ENCODE measurements at regions of chr7 and their contacts with region 1.

Region 1: GRCh38 chr7:44638611-44639557 is 32.5 kb downstream of the OGDH start:
- DNase-seq: no peak
- H3K4me3 ChIP-seq: no peak overlapping the region
- H3K27ac ChIP-seq: peak overlapping the region; percentile 77 to 80 (median 78)
- H3K4me1 ChIP-seq: peaks cover 57 to 65% (median 64%) of the 10 kb centered on the region in 4 donors
- H3K27me3 ChIP-seq: no peaks in the 10 kb centered on the region
- CTCF ChIP-seq: no peak
- EP300 ChIP-seq: no peak
- POLR2A ChIP-seq: no peak

Region 2: DNA sequence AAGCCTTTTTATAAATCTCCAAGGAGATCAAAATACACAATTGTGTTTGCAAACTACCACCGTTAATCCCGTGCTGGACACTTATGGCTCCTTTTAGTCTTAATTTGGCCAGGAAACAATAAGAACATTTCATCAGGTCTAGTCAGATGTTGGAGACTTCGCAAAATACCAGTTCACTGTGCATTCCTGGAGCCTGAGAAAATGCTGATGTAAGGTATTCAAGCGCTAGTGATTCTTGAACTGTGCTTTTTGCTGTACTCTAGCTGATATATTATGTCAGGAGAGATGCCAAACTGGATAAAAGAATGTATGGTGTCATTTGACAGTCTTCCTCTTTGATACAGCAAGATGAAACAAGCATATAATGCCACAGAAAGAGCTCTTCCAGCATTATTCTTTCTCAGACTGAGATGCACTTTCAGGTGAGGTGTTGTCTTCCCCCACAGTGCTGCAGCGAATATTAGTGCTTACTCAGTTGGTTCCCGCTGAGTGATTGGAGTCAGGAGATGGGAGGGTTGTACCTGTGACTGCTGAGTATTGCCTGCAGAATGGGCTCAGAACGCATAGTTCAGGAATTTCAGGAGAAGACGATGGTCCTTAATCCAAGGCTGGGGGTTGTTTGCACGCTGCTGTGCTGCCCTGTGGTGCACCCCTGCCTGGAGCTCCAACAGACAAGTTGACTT is 26.8 kb after region 1 on chr7:
- intact Hi-C with region 1: loop called (anchors 2 kb)
- DNase-seq: no peak
- H3K4me3 ChIP-seq: no peak overlapping the region
- H3K27ac ChIP-seq: no peak overlapping the region
- H3K4me1 ChIP-seq: peaks cover 8 to 14% (median 9%) of the 10 kb centered on the region in 4 donors
- H3K27me3 ChIP-seq: no peaks in the 10 kb centered on the region
- CTCF ChIP-seq: no peak
- EP300 ChIP-seq: no peak
- POLR2A ChIP-seq: no peak